K562 (cell line): ENCODE measurements at regions of chr7 and their contacts with region 1.

Region 1: GRCh38 chr7:22166928-22167327 is 190.0 kb downstream of the RAPGEF5 start:
- DNase-seq: peak; percentile 16 to 41 (median 19)
- ATAC-seq: peak; percentile 32; the same call in 1 of the 3 replicates
- H3K4me3 ChIP-seq: no peak overlapping the region
- H3K27ac ChIP-seq: peak overlapping the region; percentile 7; the same call in 1 of the 3 replicates
- H3K4me1 ChIP-seq: peaks cover 0 to 14% of the 10 kb centered on the region in 2 experiments; a peak in 3 of 5 replicates
- H3K27me3 ChIP-seq: no peaks in the 10 kb centered on the region
- CTCF ChIP-seq: no peak
- EP300 ChIP-seq: peak; percentile 48; the same call in 1 of the 2 replicates
- POLR2A ChIP-seq: no peak
- RAD21 ChIP-seq: no peak

Region 2: GRCh38 chr7:22121702-22122474 is 45.0 kb before region 1 on chr7:
- CTCF ChIA-PET with region 1: interaction called, 3 read pairs
- POLR2A ChIA-PET with region 1: no interaction called
- in situ Hi-C with region 1: no loop called
- intact Hi-C with region 1: loop called (anchors 5 kb)
- DNase-seq: peak in 2 of 4 experiments; percentile 42 to 58
- ATAC-seq: peak; percentile 74
- H3K4me3 ChIP-seq: no peak overlapping the region
- H3K27ac ChIP-seq: no peak overlapping the region; the same call in 2 of the 3 replicates
- H3K4me1 ChIP-seq: peaks cover 3 to 22% of the 10 kb centered on the region in 2 experiments; a peak in 3 of 5 replicates
- H3K27me3 ChIP-seq: peaks cover 2 to 6% of the 10 kb centered on the region in 2 experiments; a peak in 2 of 5 replicates
- CTCF ChIP-seq: no peak
- EP300 ChIP-seq: no peak
- POLR2A ChIP-seq: no peak
- RAD21 ChIP-seq: no peak